ENCODE measurements at regions of chr6 and their contacts with region 1.

Region 1: DNA sequence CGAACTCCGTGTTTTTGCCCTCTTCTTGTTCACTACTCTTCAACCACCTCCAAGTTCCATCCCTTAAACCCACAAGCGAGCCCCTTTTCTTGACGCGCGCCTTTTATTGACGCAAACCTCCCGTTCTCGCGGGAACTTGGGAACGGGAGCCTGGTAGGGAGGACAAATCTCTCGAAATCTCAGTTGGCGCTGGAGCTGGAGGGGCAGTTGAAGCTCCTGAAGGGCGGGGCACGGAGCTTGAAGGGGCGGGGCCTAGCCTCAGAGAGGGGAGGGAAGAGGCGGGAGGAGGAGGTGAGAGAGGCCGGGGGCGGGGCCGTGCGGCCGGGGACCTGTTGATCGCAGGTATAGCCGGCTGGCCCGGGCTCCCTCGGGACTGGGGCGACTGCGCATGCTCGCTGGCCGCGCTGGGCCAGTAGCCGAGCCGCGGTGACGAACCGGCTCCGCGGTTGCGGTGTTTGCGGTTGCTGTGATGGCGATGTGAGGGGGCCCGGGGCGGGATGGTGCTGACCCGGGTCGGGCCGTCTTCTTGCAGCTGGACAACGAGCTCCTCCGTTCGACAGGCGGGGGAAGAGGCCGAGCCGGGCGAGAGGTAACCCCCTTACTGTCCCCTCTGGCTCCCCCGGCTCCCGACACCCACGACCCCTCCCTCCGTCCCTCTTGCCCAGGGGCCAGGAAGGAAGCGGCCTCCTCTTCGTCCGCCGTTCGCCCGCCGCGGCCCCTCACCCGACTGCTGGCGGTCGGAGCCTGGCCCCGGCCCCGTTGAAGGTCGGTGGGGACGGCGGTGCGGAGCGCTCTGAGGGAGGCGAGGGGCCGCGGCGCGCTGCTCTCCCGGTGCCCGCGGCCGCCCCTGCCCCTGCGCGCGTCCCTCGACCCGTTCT is at the start of gene FAM135A:
- DNase-seq: peak; percentile 98
- H3K4me3 ChIP-seq: peak within 1 kb of the TSS; percentile 64 to 94 (median 92)
- H3K27ac ChIP-seq: peak within 1 kb of the TSS; percentile 52
- H3K4me1 ChIP-seq: peaks cover 6% of the 10 kb centered on the region
- H3K27me3 ChIP-seq: peaks cover 0 to 3% of the 10 kb centered on the region in 2 experiments
- CTCF ChIP-seq: no peak
- POLR2A ChIP-seq: peak; percentile 85
- total RNA-seq, gene FAM135A: 9.6 and 11.5 TPM in 2 replicates

Region 2: GRCh38 chr6:70253923-70254322 is 159.4 kb before region 1 on chr6:
- CTCF ChIA-PET with region 1: no interaction called
- POLR2A ChIA-PET with region 1: no interaction called
- dilution Hi-C with region 1: no loop called
- intact Hi-C with region 1: no loop called
- DNase-seq: no peak
- H3K4me3 ChIP-seq: no peak overlapping the region
- H3K27ac ChIP-seq: no peak overlapping the region
- H3K4me1 ChIP-seq: no peaks in the 10 kb centered on the region
- H3K27me3 ChIP-seq: no peaks in the 10 kb centered on the region
- CTCF ChIP-seq: no peak
- POLR2A ChIP-seq: no peak

Region 3: GRCh38 chr6:70398783-70399728 is 14.3 kb before region 1 on chr6:
- CTCF ChIA-PET with region 1: interaction called, 3 read pairs
- POLR2A ChIA-PET with region 1: no interaction called
- dilution Hi-C with region 1: no loop called
- intact Hi-C with region 1: loop called (anchors 2 kb)
- DNase-seq: peak; percentile 49
- H3K4me3 ChIP-seq: peak overlapping the region in 1 of 3 experiments; percentile 21
- H3K27ac ChIP-seq: no peak overlapping the region
- H3K4me1 ChIP-seq: peaks cover 16% of the 10 kb centered on the region
- H3K27me3 ChIP-seq: peaks cover 4 to 7% of the 10 kb centered on the region in 2 experiments
- CTCF ChIP-seq: no peak
- POLR2A ChIP-seq: no peak

Region 4: DNA sequence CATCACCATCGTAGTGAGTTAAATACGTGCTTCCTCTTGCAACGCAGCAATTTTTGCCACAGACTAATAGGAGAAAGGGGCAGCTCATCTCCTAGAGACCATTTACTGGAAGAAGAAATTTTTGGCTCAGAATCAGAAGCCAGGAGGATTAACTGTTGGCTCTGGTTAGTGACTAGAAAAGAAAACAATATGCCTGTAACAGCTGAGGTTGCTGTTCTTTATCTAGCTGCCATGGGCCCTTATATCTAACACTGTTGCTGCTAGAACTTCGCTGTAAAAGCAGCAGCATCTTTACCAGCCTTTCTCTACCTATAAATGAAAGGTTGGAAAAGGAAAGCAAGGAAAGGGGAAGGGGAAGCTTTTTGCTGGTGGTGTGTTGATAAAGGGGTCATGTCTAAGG is 65.9 kb after region 1 on chr6:
- CTCF ChIA-PET with region 1: no interaction called
- POLR2A ChIA-PET with region 1: interaction called, 12 read pairs
- dilution Hi-C with region 1: no loop called
- intact Hi-C with region 1: no loop called
- DNase-seq: peak; percentile 19
- H3K4me3 ChIP-seq: no peak overlapping the region
- H3K27ac ChIP-seq: no peak overlapping the region
- H3K4me1 ChIP-seq: no peaks in the 10 kb centered on the region
- H3K27me3 ChIP-seq: no peaks in the 10 kb centered on the region
- CTCF ChIP-seq: no peak
- POLR2A ChIP-seq: no peak

Region 5: DNA sequence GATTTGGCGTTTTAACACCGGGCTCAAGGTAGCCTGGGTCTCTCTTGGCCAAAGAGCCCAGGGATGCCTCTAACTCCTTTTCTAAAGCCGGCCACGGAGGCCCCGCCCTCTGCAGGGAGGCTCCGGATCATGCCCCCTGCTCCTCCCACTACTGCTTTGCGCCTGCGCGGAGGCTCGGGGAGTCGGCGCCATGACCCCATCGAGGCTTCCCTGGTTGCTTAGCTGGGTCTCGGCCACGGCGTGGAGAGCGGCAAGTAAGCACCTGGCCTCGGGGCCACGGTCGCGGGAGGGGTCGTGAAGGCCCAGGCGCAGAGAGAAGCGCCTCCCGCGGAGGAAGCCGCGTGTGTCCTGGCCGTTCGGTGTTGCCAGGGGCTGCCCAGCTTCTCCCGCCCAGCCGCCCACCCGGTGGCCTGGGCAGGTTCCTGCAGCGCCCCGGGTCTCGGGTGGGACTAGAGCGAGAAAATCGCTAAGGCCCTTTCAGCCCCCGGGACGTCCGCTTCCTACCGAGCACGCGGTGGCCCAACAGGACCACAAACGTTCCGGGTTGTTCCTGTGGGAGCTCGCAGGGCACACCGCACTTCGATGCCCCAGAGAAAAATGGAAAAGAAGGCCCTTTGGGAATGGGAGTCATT is 153.5 kb after region 1 on chr6 and contains the start of gene SDHAF4:
- CTCF ChIA-PET with region 1: interaction called, 4 read pairs
- POLR2A ChIA-PET with region 1: no interaction called
- dilution Hi-C with region 1: no loop called
- intact Hi-C with region 1: loop called (anchors 5 kb)
- DNase-seq: peak; percentile 90
- H3K4me3 ChIP-seq: peak within 1 kb of the TSS; percentile 90 to 94 (median 92)
- H3K27ac ChIP-seq: peak within 1 kb of the TSS; percentile 73
- H3K4me1 ChIP-seq: peaks cover 6% of the 10 kb centered on the region
- H3K27me3 ChIP-seq: no peaks in the 10 kb centered on the region
- CTCF ChIP-seq: peak in 1 of 2 donors; percentile 2
- POLR2A ChIP-seq: peak; percentile 93
- total RNA-seq, gene SDHAF4: 8.6 and 10.8 TPM in 2 replicates

Region 6: GRCh38 chr6:70667711-70668498 is 254.6 kb after region 1 on chr6 and contains the start of gene SMAP1:
- CTCF ChIA-PET with region 1: no interaction called
- POLR2A ChIA-PET with region 1: no interaction called
- dilution Hi-C with region 1: no loop called
- intact Hi-C with region 1: loop called (anchors 1 kb)
- DNase-seq: peak; percentile 91
- H3K4me3 ChIP-seq: peak within 1 kb of the TSS; percentile 77 to 93 (median 89)
- H3K27ac ChIP-seq: peak within 1 kb of the TSS; percentile 75
- H3K4me1 ChIP-seq: peaks cover 16% of the 10 kb centered on the region
- H3K27me3 ChIP-seq: no peaks in the 10 kb centered on the region
- CTCF ChIP-seq: peak in 1 of 2 donors; percentile 1
- POLR2A ChIP-seq: peak; percentile 19
- total RNA-seq, gene SMAP1: 24.6 and 24.7 TPM in 2 replicates